ENCODE measurements at regions of chr16 and their contacts with region 1.

Region 1: DNA sequence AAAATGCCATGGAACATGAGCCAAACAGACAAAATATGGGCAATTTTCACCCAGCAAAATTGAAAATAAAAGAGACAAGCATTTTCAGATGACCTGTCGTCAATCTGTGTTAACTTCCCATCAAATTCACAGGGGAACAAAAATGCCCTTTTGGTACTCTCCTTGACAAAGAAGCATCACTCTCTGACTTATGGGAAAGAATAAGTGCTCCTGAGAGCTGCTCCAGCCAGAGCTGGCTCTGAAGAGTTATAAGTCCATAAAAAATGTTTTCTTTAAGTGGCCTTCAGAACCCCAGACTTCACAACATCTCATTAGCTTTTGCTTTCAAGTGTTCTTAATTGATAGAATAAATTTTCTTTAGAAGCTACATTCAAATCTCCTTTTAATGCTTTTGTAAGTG is 721.4 kb upstream of the GOT2 start:
- DNase-seq: no peak
- ATAC-seq: no peak
- H3K4me3 ChIP-seq: no peak overlapping the region
- H3K27ac ChIP-seq: no peak overlapping the region
- H3K4me1 ChIP-seq: no peaks in the 10 kb centered on the region
- H3K27me3 ChIP-seq: no peaks in the 10 kb centered on the region

Region 2: GRCh38 chr16:59500601-59501000 is 45.1 kb after region 1 on chr16:
- intact Hi-C with region 1: loop called in 1 of 2 experiments (anchors 5 kb)
- DNase-seq: no peak
- ATAC-seq: no peak
- H3K4me3 ChIP-seq: no peak overlapping the region
- H3K27ac ChIP-seq: no peak overlapping the region
- H3K4me1 ChIP-seq: no peaks in the 10 kb centered on the region
- H3K27me3 ChIP-seq: no peaks in the 10 kb centered on the region

Region 3: DNA sequence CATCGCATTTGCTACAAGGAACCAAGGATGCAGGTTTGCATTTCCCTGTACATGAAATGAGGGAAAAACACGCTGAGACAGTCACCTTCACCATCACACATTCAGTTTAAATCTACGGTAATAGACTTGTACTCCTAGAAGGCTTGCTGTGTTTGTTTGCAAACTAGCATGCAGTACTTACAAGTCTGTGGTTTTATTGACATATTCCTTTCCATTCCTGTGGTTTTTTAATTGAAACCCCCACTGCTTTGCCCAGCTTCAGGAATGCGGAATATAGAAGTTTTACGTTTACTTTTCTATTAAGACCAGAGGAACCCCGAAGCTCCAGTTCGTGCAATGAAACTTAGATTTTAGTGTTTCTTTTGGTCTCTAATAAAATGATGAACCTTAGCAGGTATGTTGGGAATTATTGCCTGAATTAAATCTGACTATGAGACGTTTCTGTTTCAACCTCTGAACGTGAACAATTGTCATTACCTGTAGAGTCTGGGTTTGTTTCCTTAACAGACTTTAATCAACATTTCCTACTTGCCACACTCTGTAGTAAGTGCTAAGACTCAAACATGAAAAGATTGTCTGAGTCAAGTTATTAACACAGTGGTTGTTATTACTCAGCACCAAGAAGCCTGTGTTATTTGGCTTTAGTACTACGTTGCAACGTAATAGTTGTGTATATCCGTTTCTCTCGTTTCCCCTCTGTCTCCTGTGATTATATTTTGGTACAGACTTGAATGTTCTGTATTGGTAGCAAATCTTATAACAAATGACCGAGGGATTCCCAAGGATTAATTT is 71.9 kb after region 1 on chr16:
- intact Hi-C with region 1: no loop called
- DNase-seq: no peak
- ATAC-seq: no peak
- H3K4me3 ChIP-seq: no peak overlapping the region
- H3K27ac ChIP-seq: no peak overlapping the region
- H3K4me1 ChIP-seq: no peaks in the 10 kb centered on the region
- H3K27me3 ChIP-seq: no peaks in the 10 kb centered on the region